ENCODE measurements at regions of chrX and their contacts with region 1.

Region 1: GRCh38 chrX:51614353-51615012 is 4.2 kb downstream of the CENPVL3 start:
- DNase-seq: peak; percentile 6
- ATAC-seq: peak; percentile 80
- H3K4me3 ChIP-seq: no peak overlapping the region
- H3K27ac ChIP-seq: no peak overlapping the region
- H3K4me1 ChIP-seq: no peaks in the 10 kb centered on the region
- H3K27me3 ChIP-seq: 0 out of 2 replicates have a peak, but pooled peaks cover 1% of the 10 kb centered on the region
- CTCF ChIP-seq: peak; percentile 16 to 71 (median 48); a peak in 4 of 6 replicates
- POLR2A ChIP-seq: no peak
- RAD21 ChIP-seq: peak; percentile 73

Region 2: DNA sequence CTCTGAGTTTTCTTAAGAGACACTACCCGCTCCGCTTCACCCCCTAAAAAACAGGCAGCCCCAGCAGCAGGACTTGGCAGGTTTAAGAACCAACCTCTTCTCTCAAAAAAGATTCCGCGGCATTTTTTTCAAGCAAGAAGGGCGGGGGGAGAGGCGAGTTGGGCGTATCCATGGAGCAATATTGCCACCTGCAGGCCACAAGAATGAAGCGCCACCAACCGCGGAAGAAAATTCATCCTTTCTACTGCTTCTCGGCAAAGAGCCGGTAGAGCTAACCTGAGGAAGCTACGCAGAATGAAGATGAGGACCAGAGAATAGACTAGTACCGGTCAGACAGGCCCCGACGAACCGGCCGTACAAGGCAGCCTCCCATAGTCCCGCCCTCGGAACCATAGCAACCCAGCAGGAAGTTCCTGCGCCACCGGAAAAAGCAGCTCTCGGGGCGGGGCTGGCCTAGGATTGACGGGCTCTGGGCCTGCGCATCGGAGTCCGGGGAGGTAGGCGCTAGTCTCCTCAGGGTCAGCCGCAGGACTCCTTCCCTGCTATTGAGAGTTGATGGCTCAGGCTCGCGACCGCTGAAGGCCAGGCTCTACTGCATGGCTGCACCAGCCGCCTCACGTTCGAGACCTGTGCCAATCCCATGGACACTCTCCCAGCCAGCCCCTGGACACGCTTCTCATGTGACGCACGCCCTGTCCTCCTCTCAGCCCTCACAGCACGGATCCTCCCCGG is 647.1 kb after region 1 on chrX:
- CTCF ChIA-PET with region 1: no interaction called
- POLR2A ChIA-PET with region 1: no interaction called
- RAD21 ChIA-PET with region 1: no interaction called
- intact Hi-C with region 1: loop called (anchors 1 kb)
- DNase-seq: peak; percentile 53
- ATAC-seq: peak; percentile 97
- H3K4me3 ChIP-seq: peak overlapping the region; percentile 39 to 48
- H3K27ac ChIP-seq: peak overlapping the region; percentile 61
- H3K4me1 ChIP-seq: peaks cover 3 to 13% of the 10 kb centered on the region in 2 experiments; a peak in 2 of 4 replicates
- H3K27me3 ChIP-seq: no peaks in the 10 kb centered on the region
- CTCF ChIP-seq: peak; percentile 26 to 72 (median 56); a peak in 5 of 6 replicates
- POLR2A ChIP-seq: no peak
- RAD21 ChIP-seq: peak; percentile 86

Measured in HCT116 (cell line).